ENCODE measurements at regions of chr3 and their contacts with region 1.

Region 1: DNA sequence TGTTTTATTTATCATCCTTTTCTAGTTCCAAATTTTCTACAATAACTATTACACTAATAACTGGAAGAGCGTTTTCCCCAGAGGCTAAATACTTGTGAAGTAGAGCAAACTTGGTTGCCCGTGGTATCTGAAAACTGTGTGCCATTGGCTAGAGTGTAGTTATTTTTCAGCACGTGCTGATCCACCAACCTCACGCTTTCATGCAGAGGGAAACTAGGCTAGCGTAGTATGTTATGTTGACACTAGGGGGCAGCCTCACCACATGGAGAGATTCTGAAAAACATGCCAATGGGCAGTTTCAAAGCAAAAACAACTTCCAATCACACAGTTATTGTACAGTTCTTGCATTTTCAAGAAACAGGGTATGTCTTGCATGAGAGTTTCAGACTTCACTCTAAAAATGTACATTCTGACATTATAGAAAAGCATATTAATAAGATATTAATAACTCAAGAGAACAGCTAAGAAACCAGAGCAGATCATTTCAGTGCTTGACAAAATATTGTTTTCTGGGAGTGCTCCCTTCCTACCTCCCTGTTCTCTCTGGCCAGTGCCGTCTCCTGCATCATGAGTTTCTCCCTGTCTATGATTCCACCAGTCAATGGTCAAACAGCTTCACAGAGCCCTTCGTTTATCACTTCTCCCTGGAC is 39.7 kb downstream of the SPATA12 start:
- DNase-seq: peak; percentile 10 to 62 (median 44)
- ATAC-seq: peak; percentile 84
- H3K4me3 ChIP-seq: no peak overlapping the region
- H3K4me3 Mint-ChIP-seq: no peak overlapping the region
- H3K27ac ChIP-seq: no peak overlapping the region
- H3K27ac Mint-ChIP-seq: no peak overlapping the region
- H3K4me1 ChIP-seq: no peaks in the 10 kb centered on the region
- H3K4me1 Mint-ChIP-seq: peaks cover 0 to 6% (median 0%) of the 10 kb centered on the region in 7 donors
- H3K27me3 ChIP-seq: no peaks in the 10 kb centered on the region
- H3K27me3 Mint-ChIP-seq: peaks cover 0 to 6% (median 0%) of the 10 kb centered on the region in 5 donors

Region 2: GRCh38 chr3:57164657-57165573 is 64.7 kb after region 1 on chr3 and contains the start of gene IL17RD:
- CTCF ChIA-PET with region 1: no interaction called
- POLR2A ChIA-PET with region 1: no interaction called
- intact Hi-C with region 1: loop called in 1 of 2 experiments (anchors 5 kb)
- DNase-seq: peak in 2 of 9 donors; percentile 18 to 63
- ATAC-seq: peak; percentile 75
- H3K4me3 ChIP-seq: peak within 1 kb of the TSS; percentile 3
- H3K4me3 Mint-ChIP-seq: peak within 1 kb of the TSS; percentile 83 to 90 (median 86)
- H3K27ac ChIP-seq: no peak within 1 kb of the TSS
- H3K27ac Mint-ChIP-seq: no peak within 1 kb of the TSS
- H3K4me1 ChIP-seq: no peaks in the 10 kb centered on the region
- H3K4me1 Mint-ChIP-seq: peaks cover 5 to 21% (median 12%) of the 10 kb centered on the region in 7 donors
- H3K27me3 ChIP-seq: peaks cover 0 to 4% of the 10 kb centered on the region in 2 donors
- H3K27me3 Mint-ChIP-seq: peaks cover 73 to 86% (median 82%) of the 10 kb centered on the region in 5 donors
- total RNA-seq, gene IL17RD: 0.03 to 0.05 TPM in 2 of 5 experiments, not detected in the others

Region 3: GRCh38 chr3:57627976-57628375 is 527.8 kb after region 1 on chr3:
- CTCF ChIA-PET with region 1: no interaction called
- POLR2A ChIA-PET with region 1: no interaction called
- intact Hi-C with region 1: loop called in 1 of 2 experiments (anchors 5 kb)
- DNase-seq: no peak
- ATAC-seq: no peak
- H3K4me3 ChIP-seq: no peak overlapping the region
- H3K4me3 Mint-ChIP-seq: no peak overlapping the region
- H3K27ac ChIP-seq: no peak overlapping the region
- H3K27ac Mint-ChIP-seq: peak overlapping the region in 1 of 9 donors; percentile 49
- H3K4me1 ChIP-seq: no peaks in the 10 kb centered on the region
- H3K4me1 Mint-ChIP-seq: no peaks in the 10 kb centered on the region
- H3K27me3 ChIP-seq: no peaks in the 10 kb centered on the region
- H3K27me3 Mint-ChIP-seq: no peaks in the 10 kb centered on the region